Calu3 (cell line): ENCODE measurements at regions of chr7 and their contacts with region 1.

Region 1: GRCh38 chr7:39580149-39580874 is 14.1 kb downstream of the YAE1 start:
- DNase-seq: peak; percentile 87
- H3K4me3 Mint-ChIP-seq: no peak overlapping the region
- H3K27ac Mint-ChIP-seq: no peak overlapping the region
- H3K4me1 Mint-ChIP-seq: peaks cover 13% of the 10 kb centered on the region
- H3K27me3 Mint-ChIP-seq: no peaks in the 10 kb centered on the region
- CTCF ChIP-seq: peak; percentile 88

Region 2: DNA sequence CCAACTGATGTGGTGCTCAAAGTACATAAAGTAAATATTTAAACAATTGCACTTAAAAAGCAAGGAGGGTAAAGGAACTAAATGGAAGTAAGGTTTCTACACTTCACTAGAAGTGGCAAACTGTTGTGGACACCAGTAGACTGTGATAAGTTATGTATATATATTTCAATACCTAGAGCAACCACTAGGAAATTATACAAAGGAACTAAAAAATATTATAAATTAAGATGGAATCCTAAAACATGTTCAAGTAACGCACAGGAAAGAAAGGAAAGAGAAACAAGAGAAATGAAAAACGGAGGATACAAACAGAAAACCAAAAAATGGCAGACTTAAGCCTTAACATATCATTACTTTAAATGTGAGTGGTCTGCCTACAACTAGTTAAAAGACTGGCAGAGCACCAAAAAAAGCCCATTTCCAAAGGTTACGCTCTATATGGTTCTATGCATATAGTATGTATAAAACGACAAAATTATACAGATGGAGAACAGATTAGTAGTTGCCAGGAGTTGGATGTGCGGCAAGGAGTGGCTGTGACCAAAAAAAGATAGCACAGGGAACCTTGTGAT is 690.4 kb before region 1 on chr7:
- CTCF ChIA-PET with region 1: no interaction called
- intact Hi-C with region 1: no loop called
- DNase-seq: no peak
- H3K4me3 Mint-ChIP-seq: no peak overlapping the region
- H3K27ac Mint-ChIP-seq: no peak overlapping the region
- H3K4me1 Mint-ChIP-seq: peaks cover 49% of the 10 kb centered on the region
- H3K27me3 Mint-ChIP-seq: no peaks in the 10 kb centered on the region
- CTCF ChIP-seq: peak; percentile 12

Region 3: DNA sequence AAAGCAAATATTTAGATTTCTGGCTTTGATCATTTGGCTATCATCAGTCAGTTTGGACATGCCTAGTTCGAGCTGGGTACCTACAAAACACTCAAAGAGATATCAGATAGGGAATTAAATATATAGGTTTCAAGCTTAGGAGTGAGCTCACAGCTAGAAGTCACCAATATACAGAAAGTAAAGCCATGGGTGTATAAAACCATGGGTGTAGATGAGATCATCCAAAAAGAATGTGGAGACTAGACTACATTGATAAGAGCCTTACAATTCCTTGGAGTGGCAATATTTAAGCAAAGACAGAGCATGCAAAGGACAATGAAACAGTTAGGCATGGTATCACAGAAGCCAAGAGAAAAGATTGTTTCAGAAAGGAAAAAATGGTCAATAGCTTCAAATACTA is 35.8 kb after region 1 on chr7:
- CTCF ChIA-PET with region 1: interaction called, 11 read pairs
- intact Hi-C with region 1: loop called (anchors 5 kb)
- DNase-seq: no peak
- H3K4me3 Mint-ChIP-seq: no peak overlapping the region
- H3K27ac Mint-ChIP-seq: no peak overlapping the region
- H3K4me1 Mint-ChIP-seq: peaks cover 18% of the 10 kb centered on the region
- H3K27me3 Mint-ChIP-seq: no peaks in the 10 kb centered on the region
- CTCF ChIP-seq: no peak

Region 4: DNA sequence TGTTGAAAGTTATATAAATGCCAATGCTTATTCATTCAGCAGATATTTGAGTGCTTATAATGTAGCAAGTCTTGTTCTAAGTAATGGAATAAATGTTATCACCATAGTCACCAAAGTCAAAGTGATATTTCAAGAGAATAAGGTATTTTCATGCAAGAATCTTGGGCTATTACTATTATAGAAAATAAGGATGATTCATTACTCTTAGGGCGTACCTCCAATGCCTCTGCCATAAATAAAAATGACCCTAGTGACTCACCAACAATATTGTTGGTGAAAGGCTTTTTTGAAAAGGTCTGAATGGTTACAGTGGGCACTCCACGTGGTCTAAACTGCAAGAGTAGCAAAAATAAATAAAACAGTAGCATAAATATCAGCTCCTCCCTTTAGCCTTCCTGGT is 111.5 kb after region 1 on chr7:
- CTCF ChIA-PET with region 1: interaction called, 3 read pairs
- intact Hi-C with region 1: loop called (anchors 5 kb)
- DNase-seq: no peak
- H3K4me3 Mint-ChIP-seq: no peak overlapping the region
- H3K27ac Mint-ChIP-seq: no peak overlapping the region
- H3K4me1 Mint-ChIP-seq: peaks cover 9% of the 10 kb centered on the region
- H3K27me3 Mint-ChIP-seq: no peaks in the 10 kb centered on the region
- CTCF ChIP-seq: no peak

Region 5: DNA sequence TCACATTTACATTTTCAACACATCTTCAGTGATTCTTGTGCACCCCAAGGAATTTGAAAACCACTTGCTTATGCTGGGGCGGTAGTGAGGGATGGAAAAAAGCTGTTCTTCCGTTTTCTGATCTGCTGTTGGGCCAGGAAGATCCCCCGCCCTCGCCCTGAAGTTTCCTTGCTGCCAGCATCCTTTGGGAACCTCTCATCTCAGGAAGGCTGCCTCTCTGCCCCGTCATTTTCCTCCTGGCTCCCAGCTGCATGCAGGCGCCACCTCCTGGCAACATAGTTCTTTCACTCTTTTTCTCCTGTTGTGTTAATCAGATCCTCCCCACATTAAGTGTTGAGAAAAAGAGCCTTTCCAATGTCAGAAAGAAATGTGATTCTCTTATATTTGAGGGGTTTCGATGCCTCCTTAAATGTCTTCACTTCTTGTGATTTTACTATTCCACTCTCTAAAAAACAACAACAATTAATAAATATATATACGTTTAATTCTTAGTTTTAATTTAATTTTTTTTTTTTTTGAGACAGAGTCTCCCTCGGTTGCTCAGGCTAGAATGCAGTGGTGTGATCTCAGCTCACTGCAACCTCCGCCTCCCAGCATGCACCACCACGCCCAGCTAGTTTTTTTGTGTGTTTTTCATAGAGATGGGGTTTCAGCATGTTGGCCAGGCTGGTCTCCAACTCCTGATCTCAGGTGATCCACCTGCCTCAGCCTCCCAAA is 165.9 kb after region 1 on chr7:
- CTCF ChIA-PET with region 1: interaction called, 108 read pairs
- intact Hi-C with region 1: loop called (anchors 1 kb)
- DNase-seq: peak; percentile 89
- H3K4me3 Mint-ChIP-seq: no peak overlapping the region
- H3K27ac Mint-ChIP-seq: no peak overlapping the region
- H3K4me1 Mint-ChIP-seq: peaks cover 30% of the 10 kb centered on the region
- H3K27me3 Mint-ChIP-seq: no peaks in the 10 kb centered on the region
- CTCF ChIP-seq: peak; percentile 79

Region 6: DNA sequence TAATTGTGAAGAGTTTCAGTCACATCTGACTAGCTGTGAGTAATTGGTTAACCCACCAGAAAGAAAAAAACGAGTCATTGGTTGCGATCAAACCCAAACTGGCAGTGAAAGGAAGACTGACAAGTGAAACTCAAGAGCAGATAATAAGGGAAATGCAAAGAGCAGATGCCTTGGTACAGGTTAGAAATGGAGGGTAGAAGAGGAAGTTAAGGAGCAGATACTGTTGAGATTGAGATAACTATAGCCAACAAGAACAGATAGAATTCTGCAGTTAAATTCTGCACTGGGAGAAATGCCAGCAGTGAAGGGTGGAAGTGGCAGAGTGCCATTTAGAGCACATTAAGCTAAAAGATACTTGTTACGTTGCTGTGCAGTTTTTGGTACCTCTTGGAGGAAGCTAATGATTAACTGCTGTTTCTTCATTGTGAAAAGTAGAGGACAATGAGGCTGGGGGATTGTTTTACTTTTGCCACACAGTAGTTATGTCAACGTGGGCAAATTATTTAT is 435.5 kb after region 1 on chr7:
- CTCF ChIA-PET with region 1: interaction called, 11 read pairs
- intact Hi-C with region 1: no loop called
- DNase-seq: peak; percentile 49
- H3K4me3 Mint-ChIP-seq: peak overlapping the region; percentile 5
- H3K27ac Mint-ChIP-seq: peak overlapping the region; percentile 14
- H3K4me1 Mint-ChIP-seq: peaks cover 34% of the 10 kb centered on the region
- H3K27me3 Mint-ChIP-seq: no peaks in the 10 kb centered on the region
- CTCF ChIP-seq: no peak